Endothelial cell of umbilical vein (primary cell): ENCODE measurements at regions of chr6 and their contacts with region 1.

Region 1: DNA sequence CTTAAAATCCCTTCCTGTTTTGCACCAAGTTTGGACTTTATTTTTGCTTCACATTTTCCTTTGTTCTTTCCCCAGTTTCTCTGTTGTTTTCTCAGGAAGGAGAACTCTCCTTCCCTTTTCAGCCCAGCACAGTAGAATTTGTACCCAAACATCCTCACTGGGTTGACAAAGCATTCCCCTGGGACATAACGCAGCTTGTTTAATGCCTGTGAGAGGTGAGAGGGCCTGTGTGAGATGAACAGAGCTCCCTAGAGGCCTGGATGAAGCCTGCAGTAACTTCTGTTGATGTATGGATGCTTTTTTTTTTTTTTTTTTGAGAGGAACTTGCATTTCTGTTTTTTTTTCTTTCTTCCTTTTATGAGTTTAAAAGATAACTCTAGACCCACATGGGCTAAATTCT is 104.9 kb upstream of the SLC22A23 start:
- DNase-seq: peak; percentile 98
- H3K4me3 ChIP-seq: no peak overlapping the region
- H3K27ac ChIP-seq: peak overlapping the region; percentile 59
- H3K4me1 ChIP-seq: peaks cover 18% of the 10 kb centered on the region
- H3K27me3 ChIP-seq: peaks cover 0 to 2% of the 10 kb centered on the region in 2 experiments
- CTCF ChIP-seq: peak; percentile 28 to 44
- POLR2A ChIP-seq: no peak

Region 2: DNA sequence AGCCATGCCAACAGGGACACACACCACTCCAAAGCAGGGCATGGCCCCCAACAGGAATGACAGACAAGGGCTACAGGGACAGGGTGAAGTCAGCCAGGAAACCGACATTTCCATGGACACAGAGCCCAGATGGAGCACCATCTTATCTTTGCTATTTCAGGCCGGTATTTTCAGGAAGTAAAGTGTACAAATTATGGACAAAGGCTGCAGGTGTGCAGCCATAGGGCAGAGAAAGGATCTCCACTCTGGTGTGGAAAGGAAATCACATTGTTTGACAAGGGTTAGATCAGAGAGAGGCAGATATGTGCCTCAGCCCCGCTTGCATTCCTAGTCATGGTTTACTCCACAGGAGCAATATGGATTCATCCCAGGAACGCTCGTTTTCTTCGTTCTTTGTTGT is 23.2 kb before region 1 on chr6:
- CTCF ChIA-PET with region 1: interaction called, 3 read pairs
- POLR2A ChIA-PET with region 1: no interaction called
- dilution Hi-C with region 1: no loop called
- intact Hi-C with region 1: loop called (anchors 1 kb)
- DNase-seq: peak; percentile 90
- H3K4me3 ChIP-seq: no peak overlapping the region
- H3K27ac ChIP-seq: no peak overlapping the region
- H3K4me1 ChIP-seq: peaks cover 8% of the 10 kb centered on the region
- H3K27me3 ChIP-seq: peaks cover 6 to 12% of the 10 kb centered on the region in 2 experiments
- CTCF ChIP-seq: no peak
- POLR2A ChIP-seq: no peak